PC-9 (cell line): ENCODE measurements at regions of chr16 and their contacts with region 1.

Region 1: DNA sequence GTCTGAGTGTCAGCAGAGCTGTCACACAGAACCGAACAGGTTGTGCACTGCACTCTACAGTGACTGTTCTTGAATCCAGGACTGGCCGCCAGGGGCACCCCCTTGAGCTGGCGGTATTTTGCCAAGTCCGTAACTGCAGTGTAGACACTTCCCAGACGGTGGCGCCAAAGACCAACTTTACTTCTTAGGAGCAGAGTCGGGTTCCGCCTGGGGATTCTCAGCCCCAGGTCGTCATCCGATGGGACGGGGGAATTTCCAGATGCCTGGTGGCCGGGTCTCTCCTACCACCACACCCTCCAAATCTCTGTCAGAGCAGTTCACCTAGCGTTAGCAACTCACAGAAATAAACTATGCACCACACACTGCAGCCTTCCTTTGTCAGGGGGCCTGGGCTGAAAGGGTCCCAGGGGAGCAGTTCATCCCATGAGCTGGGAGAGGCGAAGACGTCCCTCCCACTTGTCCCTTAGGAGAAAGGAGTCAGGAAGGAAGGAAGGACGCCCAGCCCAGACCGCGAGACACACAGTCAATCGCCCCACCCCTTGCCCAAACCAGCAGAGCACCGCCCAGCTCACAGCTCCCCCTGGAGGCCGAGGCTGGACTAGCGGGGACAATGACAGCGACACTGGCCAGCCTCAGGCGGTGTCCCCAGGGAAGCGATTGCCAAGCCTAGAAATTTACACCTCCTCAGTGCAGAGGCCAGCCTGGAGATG is 7.4 kb upstream of the RIPOR1 start:
- DNase-seq: peak; percentile 82 to 96
- H3K4me3 ChIP-seq: peak overlapping the region; percentile 54; the same call in 1 of the 2 replicates
- H3K27ac ChIP-seq: peak overlapping the region; percentile 70
- H3K4me1 ChIP-seq: peaks cover 22% of the 10 kb centered on the region
- H3K27me3 ChIP-seq: no peaks in the 10 kb centered on the region
- CTCF ChIP-seq: peak; percentile 88

Region 2: GRCh38 chr16:67490335-67491096 is 30.7 kb before region 1 on chr16:
- CTCF ChIA-PET with region 1: no interaction called
- POLR2A ChIA-PET with region 1: no interaction called
- intact Hi-C with region 1: no loop called
- DNase-seq: no peak
- H3K4me3 ChIP-seq: no peak overlapping the region
- H3K27ac ChIP-seq: no peak overlapping the region
- H3K4me1 ChIP-seq: 0 out of 2 replicates have a peak, but pooled peaks cover 4% of the 10 kb centered on the region
- H3K27me3 ChIP-seq: no peaks in the 10 kb centered on the region
- CTCF ChIP-seq: no peak

Region 3: GRCh38 chr16:67546761-67547422 is 25.6 kb after region 1 on chr16:
- CTCF ChIA-PET with region 1: interaction called, 3 read pairs
- POLR2A ChIA-PET with region 1: no interaction called
- intact Hi-C with region 1: loop called (anchors 2 kb)
- DNase-seq: peak in 1 of 2 experiments; percentile 75
- H3K4me3 ChIP-seq: no peak overlapping the region
- H3K27ac ChIP-seq: no peak overlapping the region
- H3K4me1 ChIP-seq: no peaks in the 10 kb centered on the region
- H3K27me3 ChIP-seq: no peaks in the 10 kb centered on the region
- CTCF ChIP-seq: peak; percentile 84

Region 4: GRCh38 chr16:67660564-67661028 is 139.3 kb after region 1 on chr16 and contains the start of gene PARD6A:
- CTCF ChIA-PET with region 1: interaction called, 5 read pairs
- POLR2A ChIA-PET with region 1: interaction called, 6 read pairs
- intact Hi-C with region 1: loop called (anchors 2 kb)
- DNase-seq: peak; percentile 79 to 87
- H3K4me3 ChIP-seq: peak within 1 kb of the TSS; percentile 97
- H3K27ac ChIP-seq: peak within 1 kb of the TSS; percentile 52
- H3K4me1 ChIP-seq: peaks cover 7% of the 10 kb centered on the region
- H3K27me3 ChIP-seq: no peaks in the 10 kb centered on the region
- CTCF ChIP-seq: no peak
- total RNA-seq, gene PARD6A: 4.4 and 8.1 TPM in 2 replicates

Region 5: DNA sequence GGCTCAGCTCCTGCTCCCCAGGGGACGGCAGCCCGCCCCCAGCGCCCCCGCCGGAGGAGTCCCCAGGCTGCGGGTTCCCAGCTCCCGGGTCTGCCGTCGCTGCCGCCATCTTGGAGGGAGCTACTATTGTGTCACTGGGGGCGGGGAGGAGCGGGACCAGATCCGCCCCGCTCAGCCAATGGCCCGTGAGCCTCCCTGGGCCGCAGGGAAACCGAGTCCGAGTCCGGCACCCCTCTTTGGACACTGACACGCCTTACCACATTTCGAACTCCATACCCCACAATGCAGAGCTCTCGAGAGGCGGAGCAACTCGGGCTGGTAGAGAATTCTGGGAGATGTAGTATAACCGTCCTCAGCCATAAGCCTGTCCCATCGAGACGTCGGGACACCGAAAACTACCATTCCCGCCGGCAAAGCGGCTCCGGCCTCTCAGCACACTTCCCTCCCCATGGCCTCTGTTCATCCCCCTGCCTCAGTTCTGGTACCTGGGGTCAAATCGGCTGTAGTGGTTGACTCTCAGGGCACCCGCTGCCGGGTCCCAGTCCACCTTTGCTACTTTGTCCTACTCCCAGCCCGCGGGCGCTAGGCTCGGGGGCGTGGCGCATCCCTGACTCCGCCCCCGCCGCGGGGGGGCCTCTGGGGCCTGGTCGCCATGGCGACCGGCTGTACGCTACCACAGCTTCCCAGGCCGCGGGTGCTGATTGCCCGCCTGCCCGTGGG is 285.3 kb after region 1 on chr16 and contains the starts of genes RANBP10 and TSNAXIP1:
- CTCF ChIA-PET with region 1: no interaction called
- POLR2A ChIA-PET with region 1: no interaction called
- intact Hi-C with region 1: loop called (anchors 5 kb)
- DNase-seq: peak; percentile 96 to 98
- H3K4me3 ChIP-seq: peak within 1 kb of the TSS; percentile 86
- H3K27ac ChIP-seq: no peak within 1 kb of the TSS
- H3K4me1 ChIP-seq: peaks cover 14% of the 10 kb centered on the region
- H3K27me3 ChIP-seq: no peaks in the 10 kb centered on the region
- CTCF ChIP-seq: no peak
- total RNA-seq, gene RANBP10: 16.1 and 21.0 TPM in 2 replicates
- total RNA-seq, gene TSNAXIP1: 1.9 and 2.2 TPM in 2 replicates

Region 6: GRCh38 chr16:68229431-68230198 is 708.4 kb after region 1 on chr16:
- CTCF ChIA-PET with region 1: no interaction called
- POLR2A ChIA-PET with region 1: no interaction called
- intact Hi-C with region 1: loop called (anchors 1 kb)
- DNase-seq: peak in 1 of 2 experiments; percentile 49
- H3K4me3 ChIP-seq: no peak overlapping the region
- H3K27ac ChIP-seq: no peak overlapping the region
- H3K4me1 ChIP-seq: peaks cover 12% of the 10 kb centered on the region
- H3K27me3 ChIP-seq: no peaks in the 10 kb centered on the region
- CTCF ChIP-seq: peak; percentile 92

Region 7: GRCh38 chr16:68328151-68328859 is 807.1 kb after region 1 on chr16:
- CTCF ChIA-PET with region 1: no interaction called
- POLR2A ChIA-PET with region 1: interaction called, 3 read pairs
- intact Hi-C with region 1: loop called (anchors 1 kb)
- DNase-seq: peak; percentile 75 to 88
- H3K4me3 ChIP-seq: no peak overlapping the region
- H3K27ac ChIP-seq: 0 out of 2 replicates have a peak overlapping the region, but pooled peaks have one; percentile 25
- H3K4me1 ChIP-seq: peaks cover 6% of the 10 kb centered on the region
- H3K27me3 ChIP-seq: no peaks in the 10 kb centered on the region
- CTCF ChIP-seq: peak; percentile 91